Activated naive CD4-positive, alpha-beta T cell treated with anti-CD3 and anti-CD28 coated beads for 36 hours (primary cell): ENCODE measurements at regions of chr1 and their contacts with region 1.

Region 1: DNA sequence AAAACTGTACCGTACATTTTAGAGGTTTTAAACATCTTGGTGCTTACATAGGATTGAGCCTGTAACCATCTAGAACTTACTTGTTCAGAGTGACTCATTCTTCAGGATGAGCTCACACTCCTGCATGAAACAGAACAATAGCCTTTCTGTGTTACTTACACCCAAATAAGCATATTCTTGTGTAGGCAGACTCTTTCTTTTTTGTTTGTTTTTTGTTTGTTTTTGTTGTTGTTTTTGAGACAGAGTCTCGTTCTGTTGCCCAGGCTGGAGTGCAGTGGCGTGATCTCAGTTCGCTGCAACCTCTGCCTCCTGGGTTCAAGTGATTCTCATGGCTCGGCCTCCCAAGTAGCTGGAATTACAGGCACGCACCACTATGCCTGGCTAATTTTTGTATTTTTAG is 3.8 kb upstream of the CA6 start:
- DNase-seq: no peak
- H3K4me3 Mint-ChIP-seq: no peak overlapping the region
- H3K27ac Mint-ChIP-seq: no peak overlapping the region
- H3K4me1 Mint-ChIP-seq: peaks cover 85% of the 10 kb centered on the region
- H3K27me3 Mint-ChIP-seq: no peaks in the 10 kb centered on the region

Region 2: DNA sequence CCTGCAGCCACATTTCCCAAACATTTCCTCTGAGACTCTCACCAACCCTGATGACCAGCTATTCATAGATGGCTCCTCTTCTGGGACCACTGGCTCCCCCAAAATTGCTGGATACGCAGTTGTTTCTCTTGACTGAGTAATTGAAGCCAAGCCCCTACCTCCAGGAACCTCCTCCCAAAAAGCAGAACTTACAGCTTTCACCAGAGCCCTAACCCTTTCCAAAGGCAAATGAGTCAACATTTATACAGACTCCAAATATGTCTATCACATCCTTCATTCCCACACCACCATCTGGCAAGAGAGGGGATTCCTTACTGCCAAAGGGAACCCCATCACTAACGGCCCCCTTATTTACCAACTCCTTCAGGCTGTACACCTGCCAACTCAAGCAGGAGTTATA is 16.5 kb before region 1 on chr1:
- CTCF ChIA-PET with region 1: interaction called, 11 read pairs
- intact Hi-C with region 1: no loop called
- DNase-seq: no peak
- H3K4me3 Mint-ChIP-seq: no peak overlapping the region
- H3K27ac Mint-ChIP-seq: no peak overlapping the region
- H3K4me1 Mint-ChIP-seq: peaks cover 31% of the 10 kb centered on the region
- H3K27me3 Mint-ChIP-seq: no peaks in the 10 kb centered on the region

Region 3: DNA sequence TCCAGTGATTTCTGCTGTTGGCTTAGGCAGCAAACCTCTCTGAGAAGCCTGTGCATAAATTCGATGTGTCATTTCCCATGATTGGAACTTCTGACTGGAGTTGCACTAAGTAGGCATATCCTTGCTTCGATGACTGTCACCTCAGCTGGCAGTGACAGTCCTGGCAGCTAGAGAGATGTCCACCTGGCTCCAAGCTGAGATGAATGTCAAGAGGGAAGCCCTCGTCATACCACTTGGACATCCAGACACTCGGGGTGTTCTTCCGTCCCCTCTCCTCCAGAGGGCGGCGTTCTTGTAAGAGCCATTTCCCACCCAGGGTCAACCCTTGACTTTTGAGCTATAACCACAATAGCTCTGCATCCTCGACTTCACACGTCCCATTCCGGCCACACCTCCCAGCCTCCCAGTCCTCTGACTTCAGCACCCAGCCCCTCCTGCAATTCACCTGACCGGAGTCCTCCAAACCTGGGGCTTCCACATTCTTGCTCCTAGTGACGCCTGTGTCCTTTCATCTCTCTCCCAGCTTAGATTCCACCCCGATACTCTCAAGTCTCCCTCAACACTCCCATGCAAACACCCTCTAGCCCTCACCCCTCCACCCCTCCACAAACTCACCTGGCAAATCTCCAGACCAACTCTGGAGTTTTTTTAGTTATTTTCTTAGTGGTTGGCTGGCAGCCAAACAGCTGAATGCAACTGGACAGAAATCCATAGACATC is 21.1 kb after region 1 on chr1:
- CTCF ChIA-PET with region 1: interaction called, 19 read pairs
- intact Hi-C with region 1: loop called (anchors 1 kb)
- DNase-seq: peak; percentile 66
- H3K4me3 Mint-ChIP-seq: peak overlapping the region; percentile 39
- H3K27ac Mint-ChIP-seq: peak overlapping the region; percentile 84
- H3K4me1 Mint-ChIP-seq: peaks cover 87% of the 10 kb centered on the region
- H3K27me3 Mint-ChIP-seq: no peaks in the 10 kb centered on the region

Region 4: GRCh38 chr1:9010781-9011323 is 68.9 kb after region 1 on chr1:
- CTCF ChIA-PET with region 1: no interaction called
- intact Hi-C with region 1: no loop called
- DNase-seq: no peak
- H3K4me3 Mint-ChIP-seq: no peak overlapping the region
- H3K27ac Mint-ChIP-seq: no peak overlapping the region
- H3K4me1 Mint-ChIP-seq: no peaks in the 10 kb centered on the region
- H3K27me3 Mint-ChIP-seq: no peaks in the 10 kb centered on the region